Sigmoid colon (tissue), 7 donors: ENCODE measurements at regions of chr15 and their contacts with region 1.

Region 1: DNA sequence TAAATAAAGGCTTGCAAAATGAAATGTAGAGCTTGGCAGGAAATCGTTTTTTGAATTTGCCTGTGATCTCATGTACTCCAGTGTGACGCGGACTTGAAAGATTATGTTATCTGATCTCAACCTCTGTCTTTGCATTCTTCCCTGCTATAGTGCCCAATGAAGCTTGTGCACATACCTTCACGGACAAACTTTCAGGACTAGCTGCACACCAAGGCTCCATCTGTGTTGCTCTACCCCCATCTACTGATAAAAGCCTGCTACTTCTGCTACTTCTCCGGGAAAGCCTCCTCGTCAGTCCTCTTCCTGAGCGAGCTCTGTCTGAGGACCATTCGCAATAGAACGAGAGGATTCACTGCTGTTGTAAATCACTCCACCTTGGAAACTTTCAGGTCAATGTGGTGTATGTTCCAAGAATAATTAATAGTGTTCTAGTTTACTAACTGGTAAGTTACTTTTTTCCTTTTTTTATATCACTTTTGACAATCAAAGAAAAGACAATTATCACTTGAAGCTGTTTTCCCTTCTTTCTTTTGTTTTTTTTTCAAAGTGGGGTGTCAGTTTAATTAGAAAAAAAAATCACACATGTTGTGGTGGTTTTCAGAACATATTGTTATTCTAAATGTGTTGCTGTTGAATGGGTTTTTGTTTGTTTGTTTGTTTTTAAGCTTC is 217.6 kb downstream of the ARRDC4 start:
- DNase-seq: peak; percentile 73
- H3K4me3 ChIP-seq: no peak overlapping the region
- H3K27ac ChIP-seq: no peak overlapping the region
- H3K4me1 ChIP-seq: no peaks in the 10 kb centered on the region
- H3K27me3 ChIP-seq: no peaks in the 10 kb centered on the region
- CTCF ChIP-seq: peak; percentile 51 to 86 (median 74)
- EP300 ChIP-seq: no peak
- POLR2A ChIP-seq: no peak

Region 2: GRCh38 chr15:97903971-97904572 is 274.0 kb before region 1 on chr15:
- intact Hi-C with region 1: loop called (anchors 2 kb)
- DNase-seq: peak; percentile 88
- H3K4me3 ChIP-seq: no peak overlapping the region
- H3K27ac ChIP-seq: no peak overlapping the region
- H3K4me1 ChIP-seq: peaks cover 0 to 16% (median 10%) of the 10 kb centered on the region in 4 donors
- H3K27me3 ChIP-seq: no peaks in the 10 kb centered on the region
- CTCF ChIP-seq: peak; percentile 48 to 78 (median 66)
- EP300 ChIP-seq: no peak
- POLR2A ChIP-seq: no peak

Region 3: DNA sequence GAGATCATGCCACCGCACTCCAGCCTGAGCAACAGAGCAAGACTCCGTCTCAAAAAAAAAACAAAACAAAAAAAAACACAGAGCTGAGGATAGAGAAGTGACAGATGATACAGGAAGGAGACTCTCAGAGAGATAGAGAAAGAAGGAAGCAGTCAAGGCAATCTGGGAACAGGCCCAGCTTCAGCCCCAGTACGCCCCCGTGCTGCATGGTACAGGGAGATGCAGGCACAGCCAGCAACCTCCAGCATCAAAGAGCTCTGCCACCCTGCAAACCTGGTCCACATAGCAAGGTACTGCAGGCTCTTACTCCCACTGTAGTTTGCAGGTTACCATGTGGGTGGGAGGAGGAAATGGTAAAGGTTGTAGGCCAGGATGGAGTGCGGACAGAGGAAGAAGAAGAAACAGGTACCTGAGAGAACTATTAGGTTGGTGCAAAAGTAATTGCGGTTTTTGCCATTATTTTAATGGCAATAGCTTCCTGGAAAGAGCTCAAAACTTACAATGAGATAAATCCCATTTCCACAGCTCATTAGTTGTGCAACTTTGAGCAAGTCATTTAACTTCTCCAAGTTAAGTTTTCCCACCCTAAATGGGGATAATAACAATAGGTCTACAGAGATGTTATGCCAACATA is 35.4 kb after region 1 on chr15:
- intact Hi-C with region 1: no loop called
- DNase-seq: no peak
- H3K4me3 ChIP-seq: no peak overlapping the region
- H3K27ac ChIP-seq: no peak overlapping the region
- H3K4me1 ChIP-seq: no peaks in the 10 kb centered on the region
- H3K27me3 ChIP-seq: no peaks in the 10 kb centered on the region
- CTCF ChIP-seq: no peak
- EP300 ChIP-seq: no peak
- POLR2A ChIP-seq: no peak